GM18951 (cell line): ENCODE measurements at regions of chr5 and their contacts with region 1.

Region 1: GRCh38 chr5:57221049-57221568 is 47.2 kb downstream of the GPBP1 start:
- POLR2A ChIP-seq: no peak

Region 2: DNA sequence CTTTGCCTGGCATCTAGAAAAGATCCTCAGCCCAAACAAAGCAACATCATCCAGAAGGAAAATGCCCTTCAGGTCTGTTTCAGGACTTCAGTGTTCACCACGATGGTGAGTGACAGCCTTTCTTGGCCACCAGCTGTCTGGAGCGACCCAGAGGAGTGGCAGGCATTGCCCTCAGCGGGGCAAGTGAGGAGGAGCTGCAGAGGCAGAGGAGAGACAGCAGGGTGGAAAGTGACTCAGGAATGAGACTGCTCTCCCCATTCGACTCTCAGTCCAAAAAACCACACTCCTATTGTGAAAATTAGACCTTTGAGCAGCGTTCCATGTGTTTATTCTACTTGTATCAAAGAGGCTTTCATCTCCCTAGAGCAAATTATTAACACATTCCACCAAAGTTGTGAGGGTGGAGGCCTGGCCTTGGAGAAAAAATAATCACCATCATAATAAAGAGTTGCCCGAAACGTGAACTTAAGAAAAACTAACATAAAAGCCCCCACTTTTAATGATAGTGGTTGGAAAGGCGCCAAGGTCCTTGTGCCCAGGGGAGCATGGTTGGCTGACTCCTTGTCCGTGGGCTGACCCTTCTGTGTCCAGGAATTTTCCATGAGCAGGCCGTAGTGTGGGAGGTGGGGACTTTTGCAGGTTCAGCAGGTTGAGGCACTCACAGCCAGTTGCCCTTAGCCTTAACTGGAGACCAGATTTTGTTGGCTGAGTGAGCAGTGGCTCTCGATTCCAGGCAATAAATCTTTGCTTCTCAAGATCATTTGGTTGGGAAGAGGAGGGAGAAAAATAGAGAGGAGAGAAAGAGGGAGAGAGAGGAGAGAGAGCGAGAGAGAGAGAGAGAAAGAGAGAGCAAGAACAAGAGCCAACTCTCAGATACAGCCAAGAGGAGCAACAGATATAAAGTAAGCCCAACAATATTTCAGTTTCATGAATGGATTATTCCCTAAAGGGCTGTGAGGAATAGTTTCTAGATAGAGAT is 862.1 kb before region 1 on chr5:
- in situ Hi-C with region 1: no loop called
- POLR2A ChIP-seq: no peak

Region 3: GRCh38 chr5:56909294-56910209 is 311.6 kb before region 1 on chr5 and contains the start of gene SETD9:
- in situ Hi-C with region 1: loop called (anchors 10 kb)
- POLR2A ChIP-seq: peak; percentile 96

Region 4: DNA sequence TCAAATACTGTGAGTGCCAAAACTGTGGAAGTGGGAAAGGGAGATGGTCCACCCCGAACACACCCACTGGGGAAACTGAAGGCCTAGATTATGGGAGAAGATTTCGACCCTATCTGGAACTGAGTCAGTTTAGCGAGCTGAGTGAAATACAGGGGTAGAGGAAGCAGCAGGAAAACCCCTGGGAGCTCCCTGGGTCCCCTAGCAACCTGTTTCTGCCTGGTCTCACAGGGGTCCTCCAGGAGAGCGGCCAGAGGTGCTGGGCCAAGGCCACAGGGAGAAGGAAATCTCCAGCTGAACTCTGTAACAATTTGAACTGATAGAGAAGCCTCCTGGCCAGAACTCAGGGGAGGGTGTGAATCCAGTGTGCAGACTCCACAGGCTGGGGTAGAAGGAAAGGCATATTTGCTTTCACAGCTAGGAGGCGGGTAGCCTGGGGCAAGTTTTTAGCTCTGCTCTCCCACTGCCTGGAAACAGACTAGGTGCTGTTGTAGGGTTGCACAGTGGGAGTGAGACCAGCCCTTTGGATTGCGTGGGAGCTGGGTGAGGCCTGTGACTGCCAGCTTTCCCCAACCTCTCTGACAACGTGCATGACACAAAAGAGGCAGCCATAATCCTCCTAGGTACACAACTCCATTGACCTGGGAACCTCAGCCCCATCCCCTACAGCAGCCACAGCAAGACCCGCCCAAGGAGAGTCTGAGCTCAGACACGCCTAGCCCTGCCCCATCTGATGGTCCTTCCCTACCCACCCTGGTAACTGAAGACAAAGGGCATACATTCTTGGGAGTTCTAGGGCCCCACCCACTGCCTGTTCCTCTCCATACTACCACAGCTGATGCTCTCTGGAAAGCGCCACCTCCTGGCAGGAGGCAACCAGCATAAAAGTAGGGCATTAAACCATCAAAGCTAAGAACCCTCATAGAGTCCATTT is 126.1 kb before region 1 on chr5:
- in situ Hi-C with region 1: no loop called
- POLR2A ChIP-seq: no peak